OCI-LY7 (cell line): ENCODE measurements at regions of chr3 and their contacts with region 1.

Region 1: DNA sequence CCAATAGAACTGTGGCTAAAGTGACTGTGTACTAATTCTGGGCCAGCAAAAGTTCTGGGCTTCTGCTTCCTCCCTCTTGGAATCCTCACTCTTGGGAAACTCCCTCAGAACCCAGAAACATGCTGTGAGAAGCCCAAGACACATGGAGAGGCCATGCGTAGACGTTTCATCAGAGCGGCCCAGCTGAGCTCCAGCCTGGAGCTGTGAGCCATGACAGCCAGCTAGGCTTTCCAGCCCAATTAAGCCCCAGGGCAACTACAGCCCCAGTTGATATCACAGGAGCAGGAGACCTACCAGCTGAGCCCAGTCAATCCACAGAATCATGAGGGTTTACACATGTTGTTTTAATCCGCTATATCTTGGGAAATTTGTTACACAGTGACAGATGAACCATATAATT is 43.6 kb upstream of the CNOT10 start:
- DNase-seq: no peak
- H3K4me3 ChIP-seq: no peak overlapping the region
- H3K27ac ChIP-seq: no peak overlapping the region
- H3K4me1 ChIP-seq: no peaks in the 10 kb centered on the region
- CTCF ChIP-seq: no peak

Region 2: DNA sequence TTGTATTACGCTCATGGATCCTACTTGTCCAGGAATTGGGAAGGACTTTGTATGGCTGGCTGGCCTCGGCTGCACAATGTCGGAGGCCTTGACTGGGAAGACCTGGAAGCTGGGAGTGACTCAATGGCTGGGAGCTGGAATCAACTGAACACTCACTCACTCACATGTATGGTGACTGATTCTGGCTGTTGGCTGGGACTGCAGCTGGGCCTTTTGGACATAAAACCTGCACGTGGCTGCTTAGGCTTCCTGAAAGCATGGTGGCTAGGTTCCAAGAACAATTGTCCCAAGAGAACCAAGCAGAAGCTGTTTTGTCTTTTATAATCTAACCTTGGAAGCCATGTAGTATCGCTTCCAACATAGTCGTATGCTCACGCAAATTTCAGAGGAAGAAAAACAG is 440.9 kb before region 1 on chr3:
- CTCF ChIA-PET with region 1: no interaction called
- POLR2A ChIA-PET with region 1: no interaction called
- intact Hi-C with region 1: loop called (anchors 10 kb)
- DNase-seq: no peak
- H3K4me3 ChIP-seq: no peak overlapping the region
- H3K27ac ChIP-seq: no peak overlapping the region
- H3K4me1 ChIP-seq: no peaks in the 10 kb centered on the region
- CTCF ChIP-seq: no peak

Region 3: DNA sequence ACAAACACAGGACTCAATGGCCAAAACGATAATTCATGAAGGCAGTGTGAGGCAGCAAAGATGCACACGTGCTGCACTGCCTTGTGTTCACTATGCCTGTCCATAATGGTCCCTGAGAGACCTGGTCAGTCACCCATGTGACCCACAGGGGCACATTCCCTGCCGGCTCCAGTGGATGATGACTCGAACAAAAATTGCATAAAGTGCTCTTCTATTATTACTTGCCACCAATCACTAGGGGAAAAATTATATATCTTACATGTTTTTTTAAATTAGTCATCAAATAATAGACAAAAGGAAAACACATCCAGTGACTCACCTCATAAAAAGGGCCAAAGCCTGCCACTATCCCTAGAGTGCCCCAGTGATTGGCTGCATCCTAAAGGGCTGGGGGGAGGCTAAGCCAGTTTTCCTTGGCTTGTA is 751.4 kb after region 1 on chr3:
- CTCF ChIA-PET with region 1: no interaction called
- POLR2A ChIA-PET with region 1: no interaction called
- intact Hi-C with region 1: no loop called
- DNase-seq: no peak
- H3K4me3 ChIP-seq: no peak overlapping the region
- H3K27ac ChIP-seq: no peak overlapping the region
- H3K4me1 ChIP-seq: no peaks in the 10 kb centered on the region
- CTCF ChIP-seq: no peak